ENCODE measurements at regions of chr17 and their contacts with region 1.

Region 1: GRCh38 chr17:29219378-29220047 is 27.1 kb upstream of the CRYBA1 start:
- DNase-seq: peak; percentile 43 to 94
- H3K4me3 ChIP-seq: no peak overlapping the region
- H3K27ac ChIP-seq: no peak overlapping the region
- H3K4me1 ChIP-seq: no peaks in the 10 kb centered on the region
- H3K27me3 ChIP-seq: no peaks in the 10 kb centered on the region
- CTCF ChIP-seq: peak; percentile 79 to 97 (median 93)
- EP300 ChIP-seq: no peak
- POLR2A ChIP-seq: no peak
- RAD21 ChIP-seq: peak; percentile 75 to 83

Region 2: DNA sequence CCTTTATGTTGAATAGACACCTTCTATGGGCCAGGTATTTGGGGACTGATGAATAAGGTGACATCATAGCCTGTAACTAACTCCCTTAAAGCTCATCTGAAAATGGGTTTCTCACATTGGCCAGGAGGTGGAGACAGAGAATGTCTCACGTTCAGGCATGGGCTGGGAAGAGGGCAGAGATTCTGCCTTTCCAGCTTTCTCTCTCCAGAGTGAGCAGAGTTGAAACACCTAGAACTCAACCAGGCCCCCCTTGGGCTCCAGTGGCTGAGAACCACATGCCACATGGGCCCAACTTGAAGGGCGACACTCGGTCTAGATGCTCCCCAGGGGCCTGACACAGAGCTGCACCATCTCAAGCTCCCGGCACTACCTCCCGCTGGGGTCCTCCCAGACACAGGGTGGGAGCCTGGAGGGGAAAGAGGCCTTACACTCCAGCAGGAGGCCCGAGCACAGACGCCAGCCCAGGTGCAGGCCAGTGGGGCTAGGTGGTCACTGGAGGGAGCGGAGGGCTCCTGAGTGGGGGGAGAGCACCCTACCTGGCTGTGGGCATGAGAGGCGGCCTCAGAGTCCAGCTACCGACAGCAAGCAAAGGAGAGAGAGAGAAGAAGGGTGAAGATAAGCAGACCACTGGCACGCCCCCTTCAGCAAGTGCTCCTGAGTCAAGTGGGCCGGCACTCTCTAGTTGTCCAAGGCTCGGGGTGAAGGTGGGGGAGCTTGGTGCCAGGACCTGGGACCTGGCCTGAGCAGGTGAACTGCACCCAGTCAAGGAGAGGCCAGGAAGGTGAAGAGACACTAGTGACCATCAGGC is 95.2 kb before region 1 on chr17:
- CTCF ChIA-PET with region 1: interaction called, 84 read pairs
- POLR2A ChIA-PET with region 1: no interaction called
- DNase-seq: peak in 1 of 2 experiments; percentile 57
- H3K4me3 ChIP-seq: no peak overlapping the region
- H3K27ac ChIP-seq: no peak overlapping the region
- H3K4me1 ChIP-seq: peaks cover 0 to 7% (median 2%) of the 10 kb centered on the region in 4 experiments; a peak in 3 of 7 replicates
- H3K27me3 ChIP-seq: no peaks in the 10 kb centered on the region
- CTCF ChIP-seq: peak; percentile 48 to 92 (median 85)
- EP300 ChIP-seq: no peak
- POLR2A ChIP-seq: no peak
- RAD21 ChIP-seq: peak; percentile 92 to 93

Region 3: GRCh38 chr17:29148790-29149430 is 70.6 kb before region 1 on chr17:
- CTCF ChIA-PET with region 1: interaction called, 333 read pairs
- POLR2A ChIA-PET with region 1: interaction called, 3 read pairs
- DNase-seq: peak; percentile 92 to 99
- H3K4me3 ChIP-seq: peak overlapping the region; percentile 7 to 57 (median 26); a peak in 5 of 8 replicates
- H3K27ac ChIP-seq: no peak overlapping the region
- H3K4me1 ChIP-seq: peaks cover 0 to 10% (median 6%) of the 10 kb centered on the region in 4 experiments; a peak in 6 of 7 replicates
- H3K27me3 ChIP-seq: no peaks in the 10 kb centered on the region
- CTCF ChIP-seq: peak; percentile 95
- EP300 ChIP-seq: no peak
- POLR2A ChIP-seq: peak in 1 of 2 experiments; percentile 67; a peak in 1 of 3 replicates
- RAD21 ChIP-seq: peak; percentile 97 to 98

Region 4: DNA sequence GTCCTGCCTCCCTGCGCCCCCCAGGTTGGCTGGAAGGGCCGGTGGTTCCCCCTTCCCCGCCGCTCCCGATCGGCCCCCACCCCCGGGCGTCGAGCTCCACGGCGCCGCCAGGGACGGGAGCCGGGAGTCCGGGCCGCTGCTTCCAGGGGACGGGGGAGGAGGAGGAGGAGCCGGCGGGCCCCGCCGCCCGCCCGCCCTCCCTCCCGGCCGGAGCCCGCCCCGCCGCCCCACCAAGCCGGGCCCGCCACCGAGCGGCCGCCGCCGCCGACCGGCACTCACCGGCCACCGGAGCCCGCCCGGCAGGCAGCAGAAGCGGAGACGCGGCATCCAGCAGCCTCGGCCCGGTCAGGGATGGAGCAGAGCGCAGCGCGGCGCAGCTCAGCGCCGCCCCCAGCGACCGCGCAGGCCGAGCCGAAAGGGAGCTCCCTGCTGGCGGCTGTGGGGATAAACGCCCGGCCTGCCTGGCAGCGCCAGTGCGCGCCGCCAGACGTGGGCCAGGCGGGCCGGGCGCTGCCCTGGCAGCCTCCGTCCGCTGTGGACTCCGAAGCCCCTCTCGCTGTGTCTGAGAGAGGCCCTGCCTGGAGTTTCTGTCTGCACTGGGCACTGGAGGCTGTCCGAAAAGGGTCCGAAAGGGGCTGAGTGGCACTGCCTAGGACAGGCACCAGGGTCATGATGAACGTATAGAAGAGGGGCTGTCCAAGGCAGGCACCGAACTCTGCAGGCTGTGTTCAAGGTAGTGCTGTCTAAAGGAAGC is 39.3 kb before region 1 on chr17 and contains the start of gene MYO18A:
- CTCF ChIA-PET with region 1: interaction called, 42 read pairs
- POLR2A ChIA-PET with region 1: no interaction called
- DNase-seq: peak; percentile 41 to 89
- H3K4me3 ChIP-seq: peak within 1 kb of the TSS; percentile 41 to 70 (median 63)
- H3K27ac ChIP-seq: no peak within 1 kb of the TSS; the same call in 1 of the 2 replicates
- H3K4me1 ChIP-seq: peaks cover 6 to 30% (median 16%) of the 10 kb centered on the region in 4 experiments
- H3K27me3 ChIP-seq: peaks cover 0 to 10% (median 5%) of the 10 kb centered on the region in 4 experiments; a peak in 3 of 7 replicates
- CTCF ChIP-seq: peak; percentile 85 to 99 (median 90)
- EP300 ChIP-seq: no peak
- POLR2A ChIP-seq: no peak
- RAD21 ChIP-seq: peak; percentile 40 to 74
- total RNA-seq, gene MYO18A: 36.6 and 43.8 TPM in 2 replicates

Region 5: GRCh38 chr17:29205047-29205446 is 14.5 kb before region 1 on chr17:
- CTCF ChIA-PET with region 1: interaction called, 66 read pairs
- POLR2A ChIA-PET with region 1: interaction called, 3 read pairs
- DNase-seq: no peak
- H3K4me3 ChIP-seq: no peak overlapping the region
- H3K27ac ChIP-seq: no peak overlapping the region
- H3K4me1 ChIP-seq: peaks cover 0 to 7% (median 3%) of the 10 kb centered on the region in 4 experiments; a peak in 6 of 7 replicates
- H3K27me3 ChIP-seq: no peaks in the 10 kb centered on the region
- CTCF ChIP-seq: no peak
- EP300 ChIP-seq: no peak
- POLR2A ChIP-seq: no peak
- RAD21 ChIP-seq: no peak

Region 6: DNA sequence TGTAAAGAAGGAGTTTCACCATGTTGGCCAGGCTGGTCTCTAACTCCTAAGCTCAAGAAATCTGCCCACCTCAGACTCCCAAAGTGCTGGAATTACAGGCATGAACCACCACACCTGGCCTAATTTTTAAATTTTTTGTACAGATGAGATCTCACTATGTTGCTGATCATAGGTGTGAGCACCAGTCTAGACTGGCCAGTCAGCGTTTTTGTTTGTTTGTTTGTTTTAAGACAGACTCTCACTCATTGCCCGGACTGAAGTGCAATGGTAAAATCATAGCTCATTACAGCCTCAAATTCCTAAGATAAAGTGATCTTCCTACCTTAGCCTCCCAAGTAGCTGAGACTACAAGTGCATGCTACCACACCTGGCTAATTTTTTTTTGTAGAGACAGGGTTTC is 132.6 kb after region 1 on chr17:
- CTCF ChIA-PET with region 1: no interaction called
- POLR2A ChIA-PET with region 1: no interaction called
- DNase-seq: no peak
- H3K4me3 ChIP-seq: no peak overlapping the region
- H3K27ac ChIP-seq: no peak overlapping the region
- H3K4me1 ChIP-seq: no peaks in the 10 kb centered on the region
- H3K27me3 ChIP-seq: no peaks in the 10 kb centered on the region
- CTCF ChIP-seq: no peak
- EP300 ChIP-seq: no peak
- POLR2A ChIP-seq: no peak
- RAD21 ChIP-seq: no peak

Measured in H1 (cell line).